GM18951 (cell line): ENCODE measurements at regions of chr13 and their contacts with region 1.

Region 1: GRCh38 chr13:77599351-77599750 is 63.8 kb downstream of the SCEL start:
- POLR2A ChIP-seq: no peak

Region 2: DNA sequence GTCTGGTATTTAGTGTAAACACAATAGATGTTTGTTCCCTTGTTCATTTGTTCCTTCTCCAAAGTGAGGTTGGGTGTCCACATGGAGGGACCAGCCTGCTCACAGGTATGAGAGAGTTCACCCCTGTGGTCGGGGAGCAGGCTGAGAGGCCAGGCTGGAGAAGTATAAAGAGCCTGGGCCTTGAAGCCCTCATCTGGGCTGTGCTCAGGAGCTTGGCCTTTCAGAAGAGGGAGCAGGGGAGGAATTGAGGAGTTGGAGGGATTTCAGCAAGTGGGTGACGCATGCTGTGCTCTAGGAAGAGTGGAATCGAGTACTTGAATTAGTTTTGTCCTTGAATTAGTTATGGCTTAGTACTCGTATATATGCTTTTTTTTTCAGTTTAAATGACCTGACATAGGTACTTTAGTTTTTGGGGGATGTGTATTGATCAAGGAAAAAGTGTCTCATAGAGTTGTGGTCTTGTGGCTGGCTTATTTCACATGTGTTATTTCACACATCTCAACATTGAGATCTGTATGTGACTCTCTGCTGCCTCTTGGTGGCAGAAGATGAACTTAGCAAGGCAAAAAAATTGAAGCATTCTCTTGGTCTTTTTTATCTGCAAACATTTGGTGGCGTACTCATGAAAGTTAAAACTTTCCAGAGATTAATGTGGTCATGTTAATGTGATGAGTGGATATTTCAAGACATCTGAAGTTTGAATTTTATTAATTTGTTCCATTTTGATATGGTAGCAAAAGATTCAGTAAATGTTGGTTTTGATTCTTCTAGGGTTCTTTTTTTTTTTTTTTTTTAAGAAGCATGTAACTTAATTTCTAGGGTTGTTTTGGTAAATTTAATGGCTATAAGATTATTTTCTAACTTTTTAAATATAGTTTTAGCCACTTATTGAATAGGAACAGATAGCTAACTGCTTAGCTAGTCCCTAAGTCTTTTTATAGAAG is 152.4 kb after region 1 on chr13:
- in situ Hi-C with region 1: loop called (anchors 5 kb)
- POLR2A ChIP-seq: no peak